Natural killer cell (primary cell): ENCODE measurements at regions of chr10 and their contacts with region 1.

Region 1: GRCh38 chr10:6580279-6581029 is 378 bp upstream of the PRKCQ start:
- DNase-seq: peak; percentile 87 to 92
- ATAC-seq: peak; percentile 75 to 92 (median 87)
- H3K4me3 ChIP-seq: peak overlapping the region; percentile 67
- H3K4me3 Mint-ChIP-seq: peak overlapping the region; percentile 95
- H3K27ac ChIP-seq: peak overlapping the region; percentile 89
- H3K27ac Mint-ChIP-seq: peak overlapping the region; percentile 85 to 92
- H3K4me1 ChIP-seq: peaks cover 51% of the 10 kb centered on the region
- H3K4me1 Mint-ChIP-seq: peaks cover 79 to 90% of the 10 kb centered on the region in 2 donors
- H3K27me3 ChIP-seq: no peaks in the 10 kb centered on the region
- H3K27me3 Mint-ChIP-seq: no peaks in the 10 kb centered on the region
- CTCF ChIP-seq: peak; percentile 68

Region 2: GRCh38 chr10:6464862-6465430 is 115.5 kb before region 1 on chr10:
- intact Hi-C with region 1: no loop called
- DNase-seq: no peak
- ATAC-seq: no peak
- H3K4me3 ChIP-seq: no peak overlapping the region
- H3K4me3 Mint-ChIP-seq: no peak overlapping the region
- H3K27ac ChIP-seq: no peak overlapping the region
- H3K27ac Mint-ChIP-seq: peak overlapping the region in 1 of 2 donors; percentile 13
- H3K4me1 ChIP-seq: no peaks in the 10 kb centered on the region
- H3K4me1 Mint-ChIP-seq: peaks cover 17 to 24% of the 10 kb centered on the region in 2 donors
- H3K27me3 ChIP-seq: no peaks in the 10 kb centered on the region
- H3K27me3 Mint-ChIP-seq: no peaks in the 10 kb centered on the region
- CTCF ChIP-seq: no peak

Region 3: GRCh38 chr10:6504296-6504695 is 76.2 kb before region 1 on chr10:
- intact Hi-C with region 1: no loop called
- DNase-seq: peak in 1 of 2 donors; percentile 43
- ATAC-seq: peak; percentile 50 to 64 (median 53)
- H3K4me3 ChIP-seq: no peak overlapping the region
- H3K4me3 Mint-ChIP-seq: no peak overlapping the region
- H3K27ac ChIP-seq: peak overlapping the region; percentile 51
- H3K27ac Mint-ChIP-seq: peak overlapping the region; percentile 82 to 85
- H3K4me1 ChIP-seq: peaks cover 7% of the 10 kb centered on the region
- H3K4me1 Mint-ChIP-seq: peaks cover 37 to 41% of the 10 kb centered on the region in 2 donors
- H3K27me3 ChIP-seq: no peaks in the 10 kb centered on the region
- H3K27me3 Mint-ChIP-seq: no peaks in the 10 kb centered on the region
- CTCF ChIP-seq: no peak

Region 4: GRCh38 chr10:6514844-6515780 is 65.3 kb before region 1 on chr10:
- intact Hi-C with region 1: no loop called
- DNase-seq: no peak
- ATAC-seq: no peak
- H3K4me3 ChIP-seq: no peak overlapping the region
- H3K4me3 Mint-ChIP-seq: no peak overlapping the region
- H3K27ac ChIP-seq: no peak overlapping the region
- H3K27ac Mint-ChIP-seq: peak overlapping the region; percentile 82 to 91
- H3K4me1 ChIP-seq: peaks cover 24% of the 10 kb centered on the region
- H3K4me1 Mint-ChIP-seq: peaks cover 70 to 82% of the 10 kb centered on the region in 2 donors
- H3K27me3 ChIP-seq: no peaks in the 10 kb centered on the region
- H3K27me3 Mint-ChIP-seq: no peaks in the 10 kb centered on the region
- CTCF ChIP-seq: no peak

Region 5: DNA sequence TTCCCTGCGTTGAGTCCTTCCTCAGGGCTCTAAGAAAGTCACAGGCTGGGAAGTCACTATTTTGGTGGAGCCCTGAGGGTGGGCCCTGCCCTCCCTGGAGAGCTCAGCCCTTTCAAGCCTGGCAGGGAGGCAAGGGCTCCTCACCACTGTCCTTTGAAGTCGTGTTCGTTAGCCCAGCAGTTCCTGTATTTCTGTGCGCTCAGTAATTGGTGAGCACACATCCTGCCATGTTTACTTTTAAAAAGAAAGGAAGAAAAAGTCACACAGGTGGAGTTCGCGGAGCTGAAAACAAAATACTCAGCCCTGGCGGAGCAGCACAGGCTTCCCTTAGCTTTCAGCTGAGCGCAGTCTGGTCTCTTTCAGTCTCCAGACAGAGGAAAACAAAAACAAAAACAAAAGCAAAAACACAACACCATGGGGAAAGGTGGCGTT is 37.4 kb before region 1 on chr10:
- intact Hi-C with region 1: loop called (anchors 5 kb)
- DNase-seq: peak; percentile 21 to 82
- ATAC-seq: peak; percentile 61 to 74 (median 65)
- H3K4me3 ChIP-seq: peak overlapping the region; percentile 19
- H3K4me3 Mint-ChIP-seq: peak overlapping the region; percentile 98
- H3K27ac ChIP-seq: peak overlapping the region; percentile 81
- H3K27ac Mint-ChIP-seq: peak overlapping the region; percentile 98 to 100
- H3K4me1 ChIP-seq: peaks cover 33% of the 10 kb centered on the region
- H3K4me1 Mint-ChIP-seq: peaks cover 65 to 66% of the 10 kb centered on the region in 2 donors
- H3K27me3 ChIP-seq: no peaks in the 10 kb centered on the region
- H3K27me3 Mint-ChIP-seq: no peaks in the 10 kb centered on the region
- CTCF ChIP-seq: no peak

Region 6: DNA sequence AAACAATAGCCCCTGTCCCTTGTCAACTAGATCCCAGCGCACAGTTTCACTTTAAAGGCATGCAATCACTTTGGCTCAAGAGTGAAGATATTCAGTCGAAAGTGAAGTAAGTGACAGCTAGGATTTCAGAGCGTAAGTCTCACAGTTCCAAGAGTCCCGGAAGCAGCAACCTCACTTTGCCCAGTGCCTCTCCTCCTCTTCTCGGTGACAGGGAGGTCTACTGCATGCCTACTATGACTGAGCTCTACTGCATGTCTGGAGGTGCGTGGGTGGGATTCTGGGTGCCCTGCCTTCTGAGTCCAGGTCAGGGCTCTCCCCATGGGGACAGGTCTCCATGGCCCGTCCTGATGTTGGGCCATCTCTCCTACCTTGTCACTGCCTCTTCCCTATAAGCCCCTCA is 17.4 kb before region 1 on chr10:
- intact Hi-C with region 1: loop called (anchors 2 kb)
- DNase-seq: peak in 1 of 2 donors; percentile 63
- ATAC-seq: peak; percentile 70 to 77 (median 71)
- H3K4me3 ChIP-seq: no peak overlapping the region
- H3K4me3 Mint-ChIP-seq: peak overlapping the region; percentile 65
- H3K27ac ChIP-seq: peak overlapping the region; percentile 75
- H3K27ac Mint-ChIP-seq: peak overlapping the region; percentile 84 to 95
- H3K4me1 ChIP-seq: peaks cover 44% of the 10 kb centered on the region
- H3K4me1 Mint-ChIP-seq: peaks cover 79 to 84% of the 10 kb centered on the region in 2 donors
- H3K27me3 ChIP-seq: no peaks in the 10 kb centered on the region
- H3K27me3 Mint-ChIP-seq: no peaks in the 10 kb centered on the region
- CTCF ChIP-seq: no peak

Region 7: DNA sequence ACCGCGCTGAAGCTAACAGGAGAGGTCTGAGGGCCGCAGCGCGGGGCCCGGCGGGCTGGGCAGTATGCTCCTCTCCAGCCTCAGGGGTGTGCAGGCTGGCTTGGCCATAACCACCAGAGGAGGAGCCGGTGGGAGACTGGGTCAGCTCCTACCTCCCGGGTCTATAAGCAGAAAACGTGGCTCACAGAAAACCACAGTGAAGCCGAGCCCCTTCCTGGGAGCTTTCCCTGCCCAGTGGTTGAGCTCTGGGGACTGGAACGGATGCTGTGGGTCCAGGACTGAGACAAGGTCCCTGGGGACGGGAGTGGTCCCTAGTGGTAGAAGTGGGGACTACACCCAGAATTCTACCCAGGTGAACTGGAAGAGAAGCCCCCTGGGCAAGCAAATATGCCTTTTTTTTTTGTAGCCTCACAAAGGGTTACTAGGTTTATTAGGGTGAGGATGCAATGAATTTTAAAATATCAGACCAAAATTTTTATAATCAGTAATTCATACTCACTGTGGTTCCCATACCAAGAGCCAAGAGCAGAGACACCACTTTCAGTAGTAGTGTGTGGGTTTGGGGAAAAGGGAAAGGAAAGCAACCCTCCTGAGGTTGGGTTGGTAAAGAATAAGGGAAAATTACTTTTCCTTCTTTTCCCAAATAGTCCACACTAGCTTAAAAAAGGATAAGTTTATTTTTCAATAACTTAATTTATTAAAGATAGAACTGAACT is 67.5 kb after region 1 on chr10:
- intact Hi-C with region 1: loop called (anchors 2 kb)
- DNase-seq: peak; percentile 45 to 86
- ATAC-seq: peak; percentile 88 to 95 (median 93)
- H3K4me3 ChIP-seq: no peak overlapping the region
- H3K4me3 Mint-ChIP-seq: no peak overlapping the region
- H3K27ac ChIP-seq: no peak overlapping the region
- H3K27ac Mint-ChIP-seq: peak overlapping the region; percentile 33 to 51
- H3K4me1 ChIP-seq: peaks cover 7% of the 10 kb centered on the region
- H3K4me1 Mint-ChIP-seq: peaks cover 17 to 18% of the 10 kb centered on the region in 2 donors
- H3K27me3 ChIP-seq: no peaks in the 10 kb centered on the region
- H3K27me3 Mint-ChIP-seq: peaks cover 0 to under 1% of the 10 kb centered on the region in 2 donors
- CTCF ChIP-seq: peak; percentile 94